ENCODE measurements at regions of chr1 and their contacts with region 1.

Region 1: DNA sequence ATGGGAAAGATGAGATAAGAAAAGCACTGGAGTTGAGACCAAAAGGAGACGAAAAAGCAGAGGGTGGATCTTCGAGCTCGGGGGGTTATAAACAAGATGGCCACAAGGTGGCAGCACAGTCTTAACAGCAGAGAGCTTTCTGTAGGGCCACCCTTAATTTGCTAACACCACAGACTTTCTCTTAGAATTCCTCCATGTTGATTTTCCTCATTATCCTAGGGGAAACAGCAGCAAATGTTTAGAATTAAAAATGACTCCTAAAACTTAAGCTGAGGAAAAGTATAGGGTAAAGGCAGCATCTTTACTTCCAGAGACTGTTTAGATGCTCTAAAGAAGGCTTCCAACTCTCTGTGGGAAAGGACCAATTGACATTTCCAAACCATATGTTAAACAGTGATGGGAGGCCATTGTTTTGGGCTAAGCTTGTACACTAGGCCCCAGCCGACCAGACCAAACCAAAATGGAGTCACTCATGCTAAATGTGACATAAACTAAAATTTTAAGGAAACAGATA is 2.5 kb upstream of the APOBEC4 start:
- H3K4me3 Mint-ChIP-seq: no peak overlapping the region
- H3K27ac Mint-ChIP-seq: peak overlapping the region; percentile 58
- H3K4me1 Mint-ChIP-seq: peaks cover 29% of the 10 kb centered on the region
- H3K27me3 Mint-ChIP-seq: peaks cover under 1% of the 10 kb centered on the region

Region 2: DNA sequence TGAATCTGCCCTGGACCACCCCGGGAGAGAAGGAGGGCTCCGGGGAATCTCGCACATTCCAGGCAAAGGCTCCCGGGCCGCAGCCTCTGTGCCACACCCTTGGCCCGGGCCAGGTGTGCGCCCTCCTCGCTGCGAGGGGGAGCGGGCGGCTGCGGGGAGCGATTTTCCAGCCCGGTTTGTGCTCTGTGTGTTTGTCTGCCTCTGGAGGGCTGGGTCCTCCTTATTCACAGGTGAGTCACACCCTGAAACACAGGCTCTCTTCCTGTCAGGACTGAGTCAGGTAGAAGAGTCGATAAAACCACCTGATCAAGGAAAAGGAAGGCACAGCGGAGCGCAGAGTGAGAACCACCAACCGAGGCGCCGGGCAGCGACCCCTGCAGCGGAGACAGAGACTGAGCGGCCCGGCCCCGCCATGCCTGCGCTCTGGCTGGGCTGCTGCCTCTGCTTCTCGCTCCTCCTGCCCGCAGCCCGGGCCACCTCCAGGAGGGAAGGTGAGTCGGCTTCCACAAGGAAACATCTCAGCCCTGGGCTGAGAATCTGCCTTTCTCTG is 469.6 kb before region 1 on chr1 and contains the start of gene LAMC2:
- intact Hi-C with region 1: no loop called
- H3K4me3 Mint-ChIP-seq: no peak within 1 kb of the TSS
- H3K27ac Mint-ChIP-seq: no peak within 1 kb of the TSS
- H3K4me1 Mint-ChIP-seq: no peaks in the 10 kb centered on the region
- H3K27me3 Mint-ChIP-seq: peaks cover 39% of the 10 kb centered on the region

Region 3: GRCh38 chr1:183635606-183636333 is 19.8 kb before region 1 on chr1 and contains the start of gene ARPC5:
- intact Hi-C with region 1: loop called (anchors 2 kb)
- H3K4me3 Mint-ChIP-seq: peak within 1 kb of the TSS; percentile 99
- H3K27ac Mint-ChIP-seq: peak within 1 kb of the TSS; percentile 98
- H3K4me1 Mint-ChIP-seq: peaks cover 27% of the 10 kb centered on the region
- H3K27me3 Mint-ChIP-seq: peaks cover 2% of the 10 kb centered on the region

Region 4: DNA sequence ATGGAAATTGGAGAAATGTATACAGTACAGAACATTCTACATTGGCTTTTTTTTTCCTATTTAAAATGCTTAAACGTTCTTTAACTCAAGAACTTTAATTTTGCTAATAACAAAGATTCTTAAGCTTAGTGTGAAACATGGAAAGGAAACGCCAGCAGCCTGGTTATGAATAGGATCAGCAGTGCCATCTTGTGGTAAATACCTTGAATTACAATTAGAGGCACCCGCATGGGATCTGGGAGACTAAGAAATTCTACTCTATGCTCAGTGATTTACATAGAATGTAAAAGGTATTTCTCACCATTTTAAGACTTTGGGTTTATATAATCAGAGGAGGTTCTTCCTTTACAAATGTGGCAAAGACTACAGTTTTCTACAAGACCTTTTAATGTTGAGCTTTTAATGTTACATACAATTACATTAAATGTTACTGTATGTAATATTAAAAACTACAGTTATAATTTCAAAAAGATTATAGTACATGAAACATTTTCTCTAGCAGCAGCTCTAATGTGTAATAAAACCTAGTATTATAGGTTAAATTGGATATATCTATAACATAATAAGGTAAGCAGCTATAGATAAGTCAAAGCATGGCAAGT is 29.6 kb after region 1 on chr1:
- intact Hi-C with region 1: loop called (anchors 5 kb)
- H3K4me3 Mint-ChIP-seq: no peak overlapping the region
- H3K27ac Mint-ChIP-seq: no peak overlapping the region
- H3K4me1 Mint-ChIP-seq: peaks cover 30% of the 10 kb centered on the region
- H3K27me3 Mint-ChIP-seq: peaks cover 12% of the 10 kb centered on the region

Region 5: GRCh38 chr1:183834568-183834967 is 178.9 kb after region 1 on chr1:
- intact Hi-C with region 1: no loop called
- H3K4me3 Mint-ChIP-seq: no peak overlapping the region
- H3K27ac Mint-ChIP-seq: no peak overlapping the region
- H3K4me1 Mint-ChIP-seq: peaks cover 60% of the 10 kb centered on the region
- H3K27me3 Mint-ChIP-seq: no peaks in the 10 kb centered on the region

Region 6: DNA sequence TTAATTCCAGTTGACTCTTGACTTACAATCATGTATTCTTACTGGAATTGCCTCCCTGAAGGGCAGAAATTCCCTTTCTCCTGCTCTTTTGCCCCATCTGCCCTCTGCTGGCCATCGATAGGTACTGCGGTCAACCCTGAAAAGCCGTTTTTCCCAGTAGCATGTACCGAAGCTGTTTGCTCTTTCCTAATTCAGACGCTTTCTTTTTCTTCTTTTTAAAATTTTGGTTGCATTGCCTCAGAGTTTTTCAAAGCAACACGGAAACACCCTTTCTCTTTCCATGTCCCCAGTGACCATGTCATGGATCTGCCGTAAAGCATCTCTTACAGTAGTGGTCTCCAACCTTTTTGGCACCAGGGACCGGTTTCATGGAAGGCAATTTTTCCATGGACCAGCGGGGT is 567.0 kb after region 1 on chr1:
- intact Hi-C with region 1: loop called (anchors 10 kb)
- H3K4me3 Mint-ChIP-seq: no peak overlapping the region
- H3K27ac Mint-ChIP-seq: no peak overlapping the region
- H3K4me1 Mint-ChIP-seq: peaks cover 8% of the 10 kb centered on the region
- H3K27me3 Mint-ChIP-seq: no peaks in the 10 kb centered on the region

Measured in dendritic cell treated with granulocyte-macrophage colony-stimulating factor and Interleukin-4, amounts not matched to agents 40 ng/mL and 50 ng/mL, for 4 days (primary cell).